BJ (cell line): ENCODE measurements at regions of chr4 and their contacts with region 1.

Region 1: GRCh38 chr4:76179398-76180318 is 31.5 kb upstream of the NUP54 start:
- DNase-seq: peak; percentile 8
- H3K4me3 ChIP-seq: no peak overlapping the region
- H3K27me3 ChIP-seq: no peaks in the 10 kb centered on the region
- CTCF ChIP-seq: peak; percentile 88

Region 2: DNA sequence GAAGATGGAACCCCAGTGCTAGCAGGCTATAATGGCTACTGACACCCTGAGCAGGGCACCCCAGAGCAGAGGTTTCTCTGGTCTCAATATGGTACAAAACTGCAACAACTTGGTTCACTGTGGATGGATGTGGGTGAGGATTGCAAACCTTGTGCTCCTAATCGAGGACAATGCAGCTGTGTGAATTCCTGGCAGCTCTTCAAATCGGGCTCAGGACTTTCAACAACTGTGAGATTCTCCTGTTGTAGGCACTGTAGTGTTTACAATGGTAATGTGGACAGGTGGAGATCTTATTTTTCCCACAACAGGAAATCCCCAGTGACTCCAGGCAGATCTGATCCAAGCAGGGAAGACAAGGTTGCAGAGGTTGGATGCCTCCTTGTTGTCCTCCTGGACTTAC is 766.9 kb before region 1 on chr4:
- CTCF ChIA-PET with region 1: no interaction called
- POLR2A ChIA-PET with region 1: no interaction called
- DNase-seq: no peak
- H3K4me3 ChIP-seq: no peak overlapping the region
- H3K27me3 ChIP-seq: no peaks in the 10 kb centered on the region
- CTCF ChIP-seq: no peak

Region 3: DNA sequence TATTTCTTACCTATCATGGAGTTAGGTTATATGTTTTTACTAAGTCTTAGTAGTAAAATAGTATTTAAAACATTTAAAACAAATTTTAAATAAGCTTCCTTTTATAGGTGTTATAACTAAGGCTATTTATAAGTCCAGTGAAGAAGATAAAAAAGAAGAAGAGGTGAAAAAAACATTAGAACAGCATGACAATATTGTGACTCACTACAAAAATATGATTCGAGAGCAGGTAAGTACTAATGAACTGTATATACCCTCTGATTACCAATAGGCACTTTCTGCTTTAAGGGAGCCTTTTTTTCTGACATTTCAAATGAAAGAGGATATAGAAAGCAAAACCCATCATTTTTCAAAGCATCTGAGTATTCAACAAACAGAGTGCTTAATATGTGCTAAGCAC is 378.7 kb before region 1 on chr4:
- CTCF ChIA-PET with region 1: no interaction called
- POLR2A ChIA-PET with region 1: no interaction called
- DNase-seq: no peak
- H3K4me3 ChIP-seq: no peak overlapping the region
- H3K27me3 ChIP-seq: no peaks in the 10 kb centered on the region
- CTCF ChIP-seq: no peak

Region 4: DNA sequence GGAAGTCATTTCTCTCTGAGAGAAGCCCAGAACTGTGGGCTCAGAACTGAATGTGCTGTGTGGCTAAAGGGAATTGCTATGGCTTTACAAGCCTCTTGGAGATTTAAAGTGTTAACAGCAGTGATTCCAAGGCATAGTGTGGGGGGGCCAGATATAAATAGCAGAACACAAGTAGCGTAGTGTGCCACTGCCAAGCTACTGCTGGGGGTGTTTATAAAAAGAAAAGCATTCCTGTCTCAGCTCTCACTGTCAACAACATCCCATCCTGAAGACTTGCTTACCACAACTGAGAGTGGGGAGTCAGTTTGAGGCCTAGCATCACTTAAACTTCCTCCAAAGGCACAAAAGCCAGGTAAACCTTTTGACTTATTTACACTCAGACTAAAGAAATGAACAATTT is 105.2 kb before region 1 on chr4 and contains the start of gene ART3:
- CTCF ChIA-PET with region 1: no interaction called
- POLR2A ChIA-PET with region 1: no interaction called
- DNase-seq: no peak
- H3K4me3 ChIP-seq: no peak within 1 kb of the TSS
- H3K27me3 ChIP-seq: peaks cover 6% of the 10 kb centered on the region
- CTCF ChIP-seq: no peak
- polyA plus RNA-seq, gene ART3: not detected in 2 replicates

Region 5: GRCh38 chr4:76166480-76166879 is 13.2 kb before region 1 on chr4:
- CTCF ChIA-PET with region 1: interaction called, 20 read pairs
- POLR2A ChIA-PET with region 1: no interaction called
- DNase-seq: no peak
- H3K4me3 ChIP-seq: no peak overlapping the region
- H3K27me3 ChIP-seq: no peaks in the 10 kb centered on the region
- CTCF ChIP-seq: no peak

Region 6: GRCh38 chr4:76208005-76208765 is 28.5 kb after region 1 on chr4:
- CTCF ChIA-PET with region 1: interaction called, 21 read pairs
- POLR2A ChIA-PET with region 1: no interaction called
- DNase-seq: peak; percentile 71
- H3K4me3 ChIP-seq: peak overlapping the region; percentile 21
- H3K27me3 ChIP-seq: no peaks in the 10 kb centered on the region
- CTCF ChIP-seq: no peak

Region 7: GRCh38 chr4:76305971-76306881 is 126.6 kb after region 1 on chr4 and contains the start of gene STBD1:
- CTCF ChIA-PET with region 1: interaction called, 44 read pairs
- POLR2A ChIA-PET with region 1: no interaction called
- DNase-seq: no peak
- H3K4me3 ChIP-seq: peak within 1 kb of the TSS; percentile 87
- H3K27me3 ChIP-seq: no peaks in the 10 kb centered on the region
- CTCF ChIP-seq: 0 out of 2 replicates have a peak, but pooled peaks have one; percentile 13
- polyA plus RNA-seq, gene STBD1: 4.2 and 4.4 TPM in 2 replicates

Region 8: GRCh38 chr4:76384052-76384451 is 204.4 kb after region 1 on chr4:
- CTCF ChIA-PET with region 1: interaction called, 78 read pairs
- POLR2A ChIA-PET with region 1: no interaction called
- DNase-seq: no peak
- H3K4me3 ChIP-seq: no peak overlapping the region
- H3K27me3 ChIP-seq: peaks cover 2% of the 10 kb centered on the region; the same call in 1 of the 2 replicates
- CTCF ChIP-seq: no peak